ENCODE measurements at regions of chr5 and their contacts with region 1.

Region 1: GRCh38 chr5:159515909-159516415 is 185.7 kb upstream of the IL12B start:
- DNase-seq: peak; percentile 64
- ATAC-seq: peak; percentile 61 to 77

Region 2: GRCh38 chr5:159682623-159683022 is 166.7 kb after region 1 on chr5:
- intact Hi-C with region 1: no loop called
- DNase-seq: no peak
- ATAC-seq: no peak

Region 3: GRCh38 chr5:159764283-159765134 is 248.5 kb after region 1 on chr5:
- intact Hi-C with region 1: loop called in 1 of 2 experiments (anchors 10 kb)
- DNase-seq: peak; percentile 65
- ATAC-seq: peak; percentile 85 to 92

Measured in left cardiac atrium (tissue), 4 donors.